ENCODE measurements at regions of chr2 and their contacts with region 1.

Region 1: DNA sequence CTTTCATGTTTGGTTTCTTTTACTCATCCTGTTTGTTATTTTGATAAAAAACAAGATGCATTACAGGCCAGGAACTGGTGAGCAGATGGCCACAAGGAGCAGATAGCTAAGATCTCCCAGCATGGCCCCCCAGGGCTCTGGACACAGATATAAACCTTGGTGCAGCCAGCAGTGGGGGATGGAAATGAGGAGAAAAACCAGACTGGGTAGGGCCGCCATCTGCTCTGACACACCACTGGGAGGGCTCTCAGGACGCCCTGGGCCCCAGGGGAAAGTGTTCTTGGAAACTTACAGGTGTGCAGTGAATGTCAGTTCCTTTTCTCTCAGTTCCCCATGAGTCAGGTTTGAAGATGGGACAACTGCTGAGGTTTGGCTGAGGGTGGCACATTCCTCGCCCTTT is 49.5 kb upstream of the GPR155 start:
- DNase-seq: no peak
- H3K4me3 Mint-ChIP-seq: no peak overlapping the region
- H3K27ac Mint-ChIP-seq: no peak overlapping the region
- H3K4me1 Mint-ChIP-seq: no peaks in the 10 kb centered on the region
- H3K27me3 Mint-ChIP-seq: no peaks in the 10 kb centered on the region
- CTCF ChIP-seq: no peak

Region 2: GRCh38 chr2:173386021-173386737 is 1150.1 kb before region 1 on chr2:
- CTCF ChIA-PET with region 1: interaction called, 11 read pairs
- intact Hi-C with region 1: no loop called
- DNase-seq: no peak
- H3K4me3 Mint-ChIP-seq: no peak overlapping the region
- H3K27ac Mint-ChIP-seq: no peak overlapping the region
- H3K4me1 Mint-ChIP-seq: no peaks in the 10 kb centered on the region
- H3K27me3 Mint-ChIP-seq: no peaks in the 10 kb centered on the region
- CTCF ChIP-seq: no peak

Region 3: GRCh38 chr2:174495350-174496012 is 40.8 kb before region 1 on chr2:
- CTCF ChIA-PET with region 1: no interaction called
- intact Hi-C with region 1: no loop called
- DNase-seq: no peak
- H3K4me3 Mint-ChIP-seq: no peak overlapping the region
- H3K27ac Mint-ChIP-seq: no peak overlapping the region
- H3K4me1 Mint-ChIP-seq: peaks cover 6% of the 10 kb centered on the region
- H3K27me3 Mint-ChIP-seq: peaks cover 6% of the 10 kb centered on the region
- CTCF ChIP-seq: no peak

Measured in Calu3 (cell line).